ENCODE measurements at regions of chr16 and their contacts with region 1.

Region 1: DNA sequence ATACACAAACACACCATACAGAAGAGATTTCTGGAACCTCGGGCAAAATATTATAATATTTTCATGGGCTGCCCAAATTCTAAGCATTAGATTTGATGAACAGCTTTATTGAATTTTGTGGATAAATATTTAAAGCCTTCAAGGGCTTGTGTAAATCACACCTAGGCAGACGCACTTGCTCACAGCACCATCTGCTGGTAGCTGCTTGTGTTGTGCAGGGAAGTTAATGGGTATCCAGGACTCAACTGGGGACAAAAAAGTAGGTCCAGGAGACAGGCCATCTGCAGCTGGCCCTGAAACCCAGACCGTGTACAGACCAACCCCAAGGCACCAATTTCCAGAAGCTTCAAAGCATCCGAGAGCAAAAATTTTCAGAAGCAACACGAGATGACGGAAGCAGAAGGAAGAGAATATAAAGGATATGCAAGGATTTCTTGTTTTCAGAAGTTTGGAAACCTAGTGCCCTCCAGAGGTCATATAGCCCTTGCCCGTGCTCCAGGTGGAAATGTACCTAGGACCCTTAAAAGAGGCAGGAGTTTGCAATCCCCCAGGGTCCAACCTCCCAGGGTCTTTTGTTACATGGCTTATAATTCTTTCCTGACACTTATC is 140.0 kb downstream of the CHD9NB start:
- H3K4me3 ChIP-seq: no peak overlapping the region
- H3K27ac ChIP-seq: no peak overlapping the region
- H3K4me1 ChIP-seq: no peaks in the 10 kb centered on the region
- CTCF ChIP-seq: peak; percentile 50; the same call in 1 of the 2 replicates

Region 2: GRCh38 chr16:52191531-52192134 is 721.0 kb before region 1 on chr16:
- CTCF ChIA-PET with region 1: interaction called, 33 read pairs
- POLR2A ChIA-PET with region 1: interaction called, 3 read pairs
- H3K4me3 ChIP-seq: no peak overlapping the region
- H3K27ac ChIP-seq: no peak overlapping the region
- H3K4me1 ChIP-seq: no peaks in the 10 kb centered on the region
- CTCF ChIP-seq: peak; percentile 64

Region 3: GRCh38 chr16:52748741-52749140 is 163.9 kb before region 1 on chr16:
- CTCF ChIA-PET with region 1: no interaction called
- POLR2A ChIA-PET with region 1: no interaction called
- H3K4me3 ChIP-seq: no peak overlapping the region
- H3K27ac ChIP-seq: no peak overlapping the region
- H3K4me1 ChIP-seq: no peaks in the 10 kb centered on the region
- CTCF ChIP-seq: no peak

Region 4: GRCh38 chr16:52799149-52799548 is 113.5 kb before region 1 on chr16:
- CTCF ChIA-PET with region 1: no interaction called
- POLR2A ChIA-PET with region 1: no interaction called
- H3K4me3 ChIP-seq: no peak overlapping the region
- H3K27ac ChIP-seq: no peak overlapping the region
- H3K4me1 ChIP-seq: no peaks in the 10 kb centered on the region
- CTCF ChIP-seq: no peak

Region 5: GRCh38 chr16:52861614-52862022 is 51.1 kb before region 1 on chr16:
- CTCF ChIA-PET with region 1: interaction called, 14 read pairs
- POLR2A ChIA-PET with region 1: no interaction called
- H3K4me3 ChIP-seq: no peak overlapping the region
- H3K27ac ChIP-seq: no peak overlapping the region
- H3K4me1 ChIP-seq: no peaks in the 10 kb centered on the region
- CTCF ChIP-seq: 0 out of 2 replicates have a peak, but pooled peaks have one; percentile 38

Region 6: GRCh38 chr16:52872731-52873130 is 39.9 kb before region 1 on chr16:
- CTCF ChIA-PET with region 1: no interaction called
- POLR2A ChIA-PET with region 1: no interaction called
- H3K4me3 ChIP-seq: no peak overlapping the region
- H3K27ac ChIP-seq: no peak overlapping the region
- H3K4me1 ChIP-seq: no peaks in the 10 kb centered on the region
- CTCF ChIP-seq: no peak

Region 7: DNA sequence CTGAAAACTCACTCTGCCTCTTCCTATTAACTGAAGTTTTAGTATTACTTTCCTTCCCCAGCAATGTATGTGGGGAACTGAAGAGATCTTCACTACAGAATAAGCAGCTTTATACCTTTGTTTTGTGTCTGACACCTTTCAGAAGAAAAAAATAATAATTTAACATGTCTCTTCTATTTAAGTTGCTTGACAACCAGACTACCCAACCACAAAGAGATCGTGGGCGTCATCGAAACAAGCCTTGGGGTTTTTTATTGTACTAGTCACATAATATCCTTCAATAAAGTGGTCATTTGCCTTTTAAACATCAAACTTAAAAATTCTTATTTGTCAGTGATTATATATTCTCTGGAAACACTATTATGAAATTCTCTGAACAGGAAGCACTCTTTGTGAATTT is 16.3 kb after region 1 on chr16:
- CTCF ChIA-PET with region 1: interaction called, 21 read pairs
- POLR2A ChIA-PET with region 1: no interaction called
- H3K4me3 ChIP-seq: no peak overlapping the region
- H3K27ac ChIP-seq: no peak overlapping the region
- H3K4me1 ChIP-seq: no peaks in the 10 kb centered on the region
- CTCF ChIP-seq: no peak

Measured in HEK293 (cell line).